ENCODE measurements at regions of chr6 and their contacts with region 1.

Region 1: DNA sequence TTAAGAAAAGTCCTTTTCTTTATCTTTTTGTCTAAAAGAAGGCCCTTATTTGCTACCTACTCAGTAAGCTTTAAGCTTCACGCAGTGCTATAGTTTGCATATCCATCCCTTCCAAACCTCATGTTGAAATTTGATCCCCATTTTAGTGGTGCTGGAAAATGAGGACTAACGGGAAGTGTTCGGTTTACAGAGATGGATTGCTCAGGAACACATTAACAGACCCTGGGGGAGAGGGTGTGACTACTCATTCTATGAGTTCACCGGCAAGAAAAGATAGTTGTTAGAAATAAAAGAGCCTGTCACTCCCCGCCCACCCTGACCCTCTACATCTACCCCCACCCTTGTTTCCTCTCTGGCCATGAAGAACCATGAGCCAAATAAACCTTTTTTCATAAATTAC is 546.2 kb downstream of the MEI4 start:
- DNase-seq: no peak
- H3K4me3 ChIP-seq: no peak overlapping the region
- H3K27ac ChIP-seq: no peak overlapping the region
- H3K4me1 ChIP-seq: no peaks in the 10 kb centered on the region
- H3K27me3 ChIP-seq: no peaks in the 10 kb centered on the region
- CTCF ChIP-seq: no peak
- POLR2A ChIP-seq: no peak

Region 2: DNA sequence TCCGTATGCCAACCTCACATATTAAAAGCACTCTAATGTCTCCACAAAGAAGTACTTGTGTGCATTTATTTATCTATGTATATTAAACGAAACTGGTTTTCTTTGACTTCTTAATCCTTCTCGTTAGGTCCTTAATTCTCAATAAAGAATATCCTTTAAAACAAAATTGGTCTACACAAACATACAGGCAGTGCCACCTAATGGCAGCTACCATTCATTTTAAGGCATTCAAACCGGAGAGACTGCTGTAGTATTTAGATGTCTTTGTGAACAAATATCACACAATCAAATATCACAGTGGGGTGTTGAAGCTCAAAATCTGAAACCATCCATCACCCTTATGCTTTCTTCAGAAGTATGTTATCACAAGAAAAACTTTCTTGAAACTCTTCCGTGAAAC is 571.7 kb after region 1 on chr6:
- intact Hi-C with region 1: loop called (anchors 5 kb)
- DNase-seq: no peak
- H3K4me3 ChIP-seq: no peak overlapping the region
- H3K27ac ChIP-seq: no peak overlapping the region
- H3K4me1 ChIP-seq: no peaks in the 10 kb centered on the region
- H3K27me3 ChIP-seq: no peaks in the 10 kb centered on the region
- CTCF ChIP-seq: no peak
- POLR2A ChIP-seq: no peak

Measured in breast epithelium (tissue), 4 donors.